IMR-90 (cell line): ENCODE measurements at regions of chr5 and their contacts with region 1.

Region 1: GRCh38 chr5:125372694-125373631 is 626.5 kb upstream of the ZNF608 start:
- DNase-seq: peak; percentile 77
- ATAC-seq: peak; percentile 75
- H3K4me3 ChIP-seq: no peak overlapping the region
- H3K27ac ChIP-seq: no peak overlapping the region
- H3K4me1 ChIP-seq: no peaks in the 10 kb centered on the region
- H3K27me3 ChIP-seq: no peaks in the 10 kb centered on the region
- CTCF ChIP-seq: no peak
- POLR2A ChIP-seq: no peak
- RAD21 ChIP-seq: no peak

Region 2: DNA sequence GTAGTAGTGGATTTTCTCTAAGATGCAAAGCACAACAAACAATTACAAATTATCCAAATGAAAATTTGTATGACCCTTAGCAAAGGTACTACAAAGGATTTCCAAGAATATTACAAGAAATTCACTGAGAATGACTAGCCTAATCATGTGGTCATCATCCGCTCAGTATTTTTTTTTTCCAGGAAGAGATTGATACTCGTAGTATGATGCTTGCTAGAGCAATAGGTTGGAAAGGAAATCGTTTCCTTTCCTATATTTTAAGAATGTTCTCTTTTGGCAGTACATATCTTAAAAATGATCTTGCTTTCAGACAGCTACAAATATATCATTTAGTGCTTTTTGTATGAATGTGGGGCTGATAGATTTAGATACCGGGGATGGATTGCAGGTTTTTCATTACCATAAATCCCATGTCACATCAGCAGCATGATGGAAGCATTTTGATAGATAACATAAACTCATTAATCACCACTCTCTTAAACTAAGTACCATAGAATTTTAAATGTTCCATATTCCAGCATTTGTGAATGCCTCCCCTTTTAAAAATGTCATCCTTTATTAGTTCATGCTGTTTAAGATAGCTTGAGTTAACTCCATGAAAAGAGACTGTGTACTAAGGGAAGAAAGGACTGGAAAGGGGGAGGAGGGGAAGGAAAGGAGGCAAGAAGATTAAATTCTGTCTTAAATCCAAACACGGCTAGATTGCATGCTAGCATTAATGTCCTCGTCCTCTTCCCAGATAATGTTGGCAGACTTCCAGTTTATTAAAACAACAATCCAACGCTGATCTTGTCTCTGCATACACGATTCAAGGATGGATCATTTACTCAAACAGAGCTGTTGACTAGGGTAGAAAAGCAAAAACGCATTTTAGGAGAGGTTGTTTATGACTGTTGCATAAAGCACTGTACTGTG is 314.8 kb before region 1 on chr5:
- CTCF ChIA-PET with region 1: no interaction called
- POLR2A ChIA-PET with region 1: no interaction called
- dilution Hi-C with region 1: no loop called
- in situ Hi-C with region 1: no loop called
- intact Hi-C with region 1: no loop called
- DNase-seq: peak; percentile 69
- ATAC-seq: peak; percentile 56
- H3K4me3 ChIP-seq: peak overlapping the region; percentile 5; the same call in 1 of the 2 replicates
- H3K27ac ChIP-seq: peak overlapping the region; percentile 33; the same call in 1 of the 2 replicates
- H3K4me1 ChIP-seq: peaks cover 2% of the 10 kb centered on the region
- H3K27me3 ChIP-seq: no peaks in the 10 kb centered on the region
- CTCF ChIP-seq: no peak
- POLR2A ChIP-seq: no peak
- RAD21 ChIP-seq: no peak

Region 3: DNA sequence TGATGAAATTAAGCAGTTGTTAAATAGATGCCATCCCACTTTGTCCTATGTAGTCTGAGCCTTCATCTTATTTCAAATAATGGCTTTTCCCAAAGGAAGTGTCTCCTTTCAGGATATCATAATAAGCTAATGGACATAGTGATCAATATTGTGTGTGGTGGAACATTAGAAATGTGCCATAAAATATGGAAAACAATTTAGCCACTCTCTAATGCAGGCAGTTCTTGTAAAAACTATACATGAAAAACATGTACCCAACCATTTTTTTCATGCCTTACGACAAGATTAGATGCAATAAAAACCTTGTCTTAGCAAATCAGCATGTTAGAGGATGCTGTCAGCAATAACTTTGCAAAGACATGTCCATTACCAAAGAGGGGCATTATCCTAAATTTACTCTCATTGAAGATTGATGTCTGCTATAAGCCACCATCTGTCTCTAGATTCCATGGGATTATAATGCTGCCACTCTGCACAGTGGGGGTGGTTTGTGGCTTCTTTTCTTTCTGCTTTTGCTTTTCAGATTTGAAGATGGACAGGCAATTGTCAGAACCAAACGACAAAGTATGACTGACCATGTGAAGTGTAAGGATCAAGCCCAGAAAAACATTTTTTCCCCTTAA is 97.4 kb after region 1 on chr5:
- CTCF ChIA-PET with region 1: no interaction called
- POLR2A ChIA-PET with region 1: interaction called, 12 read pairs
- dilution Hi-C with region 1: no loop called
- in situ Hi-C with region 1: no loop called
- intact Hi-C with region 1: no loop called
- DNase-seq: no peak
- ATAC-seq: no peak
- H3K4me3 ChIP-seq: no peak overlapping the region
- H3K27ac ChIP-seq: no peak overlapping the region
- H3K4me1 ChIP-seq: no peaks in the 10 kb centered on the region
- H3K27me3 ChIP-seq: peaks cover 9% of the 10 kb centered on the region
- CTCF ChIP-seq: no peak
- POLR2A ChIP-seq: no peak
- RAD21 ChIP-seq: no peak